ENCODE measurements at regions of chr14 and their contacts with region 1.

Region 1: GRCh38 chr14:64303471-64303917 is 9.3 kb upstream of the ESR2 start:
- DNase-seq: peak; percentile 79
- H3K4me3 Mint-ChIP-seq: no peak overlapping the region
- H3K27ac Mint-ChIP-seq: no peak overlapping the region
- H3K4me1 Mint-ChIP-seq: no peaks in the 10 kb centered on the region
- H3K27me3 Mint-ChIP-seq: no peaks in the 10 kb centered on the region
- CTCF ChIP-seq: peak; percentile 64

Region 2: GRCh38 chr14:63800651-63801375 is 502.7 kb before region 1 on chr14:
- CTCF ChIA-PET with region 1: interaction called, 5 read pairs
- POLR2A ChIA-PET with region 1: no interaction called
- intact Hi-C with region 1: loop called (anchors 1 kb)
- DNase-seq: peak; percentile 40
- H3K4me3 Mint-ChIP-seq: no peak overlapping the region
- H3K27ac Mint-ChIP-seq: no peak overlapping the region
- H3K4me1 Mint-ChIP-seq: no peaks in the 10 kb centered on the region
- H3K27me3 Mint-ChIP-seq: no peaks in the 10 kb centered on the region
- CTCF ChIP-seq: no peak

Region 3: GRCh38 chr14:64005822-64006221 is 297.7 kb before region 1 on chr14:
- CTCF ChIA-PET with region 1: interaction called, 32 read pairs
- POLR2A ChIA-PET with region 1: no interaction called
- intact Hi-C with region 1: loop called (anchors 1 kb)
- DNase-seq: no peak
- H3K4me3 Mint-ChIP-seq: no peak overlapping the region
- H3K27ac Mint-ChIP-seq: no peak overlapping the region
- H3K4me1 Mint-ChIP-seq: no peaks in the 10 kb centered on the region
- H3K27me3 Mint-ChIP-seq: no peaks in the 10 kb centered on the region
- CTCF ChIP-seq: no peak

Region 4: GRCh38 chr14:64040044-64040443 is 263.4 kb before region 1 on chr14:
- CTCF ChIA-PET with region 1: no interaction called
- POLR2A ChIA-PET with region 1: no interaction called
- intact Hi-C with region 1: loop called (anchors 1 kb)
- DNase-seq: peak; percentile 44
- H3K4me3 Mint-ChIP-seq: no peak overlapping the region
- H3K27ac Mint-ChIP-seq: no peak overlapping the region
- H3K4me1 Mint-ChIP-seq: peaks cover 9% of the 10 kb centered on the region
- H3K27me3 Mint-ChIP-seq: no peaks in the 10 kb centered on the region
- CTCF ChIP-seq: peak; percentile 65

Region 5: GRCh38 chr14:64117671-64118402 is 185.7 kb before region 1 on chr14:
- CTCF ChIA-PET with region 1: no interaction called
- POLR2A ChIA-PET with region 1: no interaction called
- intact Hi-C with region 1: loop called (anchors 2 kb)
- DNase-seq: peak; percentile 89
- H3K4me3 Mint-ChIP-seq: peak overlapping the region; percentile 67
- H3K27ac Mint-ChIP-seq: peak overlapping the region; percentile 98
- H3K4me1 Mint-ChIP-seq: peaks cover 50% of the 10 kb centered on the region
- H3K27me3 Mint-ChIP-seq: no peaks in the 10 kb centered on the region
- CTCF ChIP-seq: no peak

Region 6: DNA sequence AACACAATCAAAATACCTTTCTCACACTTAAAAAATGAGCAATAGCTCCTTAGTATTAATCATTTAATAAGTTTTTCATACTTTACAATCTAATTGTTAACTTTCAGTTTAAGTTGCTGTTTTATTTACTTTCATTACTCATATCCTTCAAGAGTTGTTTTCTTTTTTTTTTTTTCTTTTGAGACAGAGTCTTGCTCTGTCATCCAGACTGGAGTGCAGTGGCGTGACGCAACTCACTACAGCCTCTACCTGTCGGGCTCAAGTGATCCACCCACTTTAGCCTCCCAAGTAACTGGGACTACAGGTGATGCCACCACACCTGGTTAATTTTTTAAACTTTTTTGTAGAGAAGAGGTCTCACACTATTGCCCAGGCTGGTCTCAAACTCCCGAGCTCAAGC is 217.2 kb after region 1 on chr14:
- CTCF ChIA-PET with region 1: no interaction called
- POLR2A ChIA-PET with region 1: no interaction called
- intact Hi-C with region 1: no loop called
- DNase-seq: no peak
- H3K4me3 Mint-ChIP-seq: no peak overlapping the region
- H3K27ac Mint-ChIP-seq: peak overlapping the region; percentile 54
- H3K4me1 Mint-ChIP-seq: peaks cover 3% of the 10 kb centered on the region
- H3K27me3 Mint-ChIP-seq: no peaks in the 10 kb centered on the region
- CTCF ChIP-seq: no peak

Region 7: DNA sequence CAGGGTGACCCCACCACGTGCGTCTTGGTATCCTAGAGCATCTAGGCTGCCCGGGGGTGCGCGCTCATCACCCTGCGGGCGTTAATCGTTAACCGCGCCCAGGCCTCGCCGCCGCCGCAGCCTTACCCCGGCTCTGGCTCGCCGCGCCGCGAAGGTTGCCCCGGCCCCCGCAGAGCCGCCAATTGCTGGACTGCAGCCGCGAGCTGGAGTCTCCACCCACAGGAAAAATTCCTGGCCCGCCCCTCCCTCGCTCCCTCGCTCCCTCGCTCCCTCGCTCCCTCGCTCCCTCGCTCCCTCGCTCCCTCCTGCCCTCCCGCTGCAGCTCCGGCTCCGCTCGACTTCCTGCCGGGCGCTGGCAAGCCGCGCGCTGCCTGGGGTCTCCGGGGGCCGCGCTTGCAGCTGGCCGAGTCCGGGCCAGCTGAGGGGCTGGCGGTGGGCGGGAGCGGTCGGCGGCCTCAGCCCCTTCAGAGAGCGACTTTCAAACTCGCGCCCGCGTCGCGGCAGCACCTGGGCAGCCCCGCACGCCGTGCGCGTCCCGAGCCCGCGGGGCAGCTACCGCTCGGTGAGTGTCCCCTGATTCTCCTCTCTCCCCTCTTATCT is 400.7 kb after region 1 on chr14 and contains the start of gene PLEKHG3:
- CTCF ChIA-PET with region 1: no interaction called
- POLR2A ChIA-PET with region 1: no interaction called
- intact Hi-C with region 1: no loop called
- DNase-seq: peak; percentile 80
- H3K4me3 Mint-ChIP-seq: peak within 1 kb of the TSS; percentile 81
- H3K27ac Mint-ChIP-seq: peak within 1 kb of the TSS; percentile 49
- H3K4me1 Mint-ChIP-seq: peaks cover 53% of the 10 kb centered on the region
- H3K27me3 Mint-ChIP-seq: no peaks in the 10 kb centered on the region
- CTCF ChIP-seq: no peak
- total RNA-seq, gene PLEKHG3: 52.9 and 72.8 TPM in 2 replicates